Naive thymus-derived CD4-positive, alpha-beta T cell (primary cell): ENCODE measurements at regions of chr14 and their contacts with region 1.

Region 1: GRCh38 chr14:50792051-50792477 is 38.9 kb downstream of the NIN start:
- DNase-seq: peak in 7 of 9 donors; percentile 35 to 56 (median 41)
- ATAC-seq: peak; percentile 72
- H3K4me3 ChIP-seq: peak overlapping the region; percentile 56
- H3K4me3 Mint-ChIP-seq: peak overlapping the region; percentile 67 to 89 (median 82)
- H3K27ac ChIP-seq: peak overlapping the region; percentile 71
- H3K27ac Mint-ChIP-seq: peak overlapping the region; percentile 91 to 99 (median 96)
- H3K4me1 ChIP-seq: peaks cover 53 to 69% of the 10 kb centered on the region in 2 donors
- H3K4me1 Mint-ChIP-seq: peaks cover 42 to 100% (median 91%) of the 10 kb centered on the region in 7 donors
- H3K27me3 ChIP-seq: no peaks in the 10 kb centered on the region
- H3K27me3 Mint-ChIP-seq: no peaks in the 10 kb centered on the region

Region 2: DNA sequence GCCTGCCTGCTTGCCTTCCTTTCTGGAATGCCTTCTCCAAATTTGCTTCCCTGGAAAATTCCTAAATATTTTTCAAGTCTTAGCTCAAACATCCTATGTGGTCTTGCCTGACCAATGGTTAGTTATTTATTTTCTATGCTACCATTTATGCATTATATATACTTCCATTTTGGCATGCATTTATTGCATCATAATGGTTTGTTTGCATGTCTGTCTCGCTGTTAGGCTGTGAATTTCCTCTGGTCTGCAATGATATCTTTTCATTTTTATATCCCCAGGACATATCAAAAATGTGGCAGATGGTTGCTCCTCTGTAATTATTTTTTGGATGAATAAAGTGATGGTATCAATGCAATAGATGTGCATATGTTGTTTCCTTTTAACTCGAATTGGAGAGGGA is 201.6 kb before region 1 on chr14:
- CTCF ChIA-PET with region 1: no interaction called
- POLR2A ChIA-PET with region 1: no interaction called
- intact Hi-C with region 1: no loop called
- DNase-seq: no peak
- ATAC-seq: no peak
- H3K4me3 ChIP-seq: no peak overlapping the region
- H3K4me3 Mint-ChIP-seq: no peak overlapping the region
- H3K27ac ChIP-seq: no peak overlapping the region
- H3K27ac Mint-ChIP-seq: no peak overlapping the region
- H3K4me1 ChIP-seq: no peaks in the 10 kb centered on the region
- H3K4me1 Mint-ChIP-seq: peaks cover 0 to 2% (median 0%) of the 10 kb centered on the region in 7 donors
- H3K27me3 ChIP-seq: no peaks in the 10 kb centered on the region
- H3K27me3 Mint-ChIP-seq: peaks cover 0 to 16% (median 0%) of the 10 kb centered on the region in 5 donors

Region 3: DNA sequence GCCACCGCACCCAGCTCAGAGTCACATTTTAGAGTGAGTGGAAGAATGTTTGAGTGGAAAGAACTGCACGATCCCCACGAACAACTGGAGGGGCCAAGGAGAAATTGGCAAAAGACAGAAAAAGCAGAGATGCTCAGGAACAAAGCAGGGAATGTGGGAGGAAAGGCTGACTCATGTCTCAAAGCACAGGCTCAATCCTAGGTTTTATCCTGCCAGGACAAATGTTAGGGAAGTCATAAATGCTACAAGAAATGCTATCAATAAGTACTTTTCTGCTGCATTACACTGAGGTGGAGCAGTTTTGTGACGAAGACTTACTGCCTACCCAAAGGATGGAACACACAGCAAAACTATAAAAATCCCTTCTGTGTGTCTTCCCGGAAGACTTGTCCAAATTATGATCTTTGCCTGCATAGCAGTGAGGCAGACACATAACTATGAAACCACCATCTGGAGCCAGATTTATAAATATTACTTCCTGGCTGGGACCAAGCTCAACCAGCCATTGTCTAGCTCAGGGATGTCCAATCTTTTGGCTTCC is 12.2 kb after region 1 on chr14:
- CTCF ChIA-PET with region 1: no interaction called
- POLR2A ChIA-PET with region 1: interaction called, 12 read pairs
- intact Hi-C with region 1: loop called (anchors 2 kb)
- DNase-seq: no peak
- ATAC-seq: no peak
- H3K4me3 ChIP-seq: no peak overlapping the region
- H3K4me3 Mint-ChIP-seq: peak overlapping the region in 2 of 10 donors; percentile 25 to 27
- H3K27ac ChIP-seq: no peak overlapping the region
- H3K27ac Mint-ChIP-seq: peak overlapping the region in 7 of 9 donors; percentile 38 to 80 (median 65)
- H3K4me1 ChIP-seq: peaks cover 0 to 5% of the 10 kb centered on the region in 2 donors
- H3K4me1 Mint-ChIP-seq: peaks cover 6 to 77% (median 64%) of the 10 kb centered on the region in 7 donors
- H3K27me3 ChIP-seq: no peaks in the 10 kb centered on the region
- H3K27me3 Mint-ChIP-seq: no peaks in the 10 kb centered on the region

Region 4: DNA sequence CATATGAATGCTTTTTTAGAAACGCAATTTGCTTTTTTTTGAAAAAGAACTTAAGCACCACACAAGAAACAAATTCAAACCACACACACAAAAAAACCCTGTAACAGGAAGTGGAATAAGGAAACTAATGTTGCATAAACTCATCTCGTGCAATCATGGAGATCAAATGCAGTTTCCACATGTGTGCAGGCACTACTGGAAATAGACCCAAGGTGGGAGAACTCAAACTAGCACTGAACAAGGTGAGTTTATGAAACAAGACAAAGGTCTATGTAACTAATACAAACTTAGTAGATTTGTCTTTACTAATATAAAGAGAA is 21.4 kb after region 1 on chr14:
- CTCF ChIA-PET with region 1: interaction called, 4 read pairs
- POLR2A ChIA-PET with region 1: interaction called, 24 read pairs
- intact Hi-C with region 1: loop called in 1 of 2 experiments (anchors 1 kb)
- DNase-seq: peak in 7 of 9 donors; percentile 61 to 80 (median 75)
- ATAC-seq: peak; percentile 92
- H3K4me3 ChIP-seq: peak overlapping the region; percentile 38
- H3K4me3 Mint-ChIP-seq: peak overlapping the region; percentile 71 to 91 (median 86)
- H3K27ac ChIP-seq: peak overlapping the region; percentile 54
- H3K27ac Mint-ChIP-seq: peak overlapping the region; percentile 85 to 95 (median 93)
- H3K4me1 ChIP-seq: peaks cover 19 to 37% of the 10 kb centered on the region in 2 donors
- H3K4me1 Mint-ChIP-seq: peaks cover 42 to 81% (median 64%) of the 10 kb centered on the region in 7 donors
- H3K27me3 ChIP-seq: no peaks in the 10 kb centered on the region
- H3K27me3 Mint-ChIP-seq: no peaks in the 10 kb centered on the region

Region 5: DNA sequence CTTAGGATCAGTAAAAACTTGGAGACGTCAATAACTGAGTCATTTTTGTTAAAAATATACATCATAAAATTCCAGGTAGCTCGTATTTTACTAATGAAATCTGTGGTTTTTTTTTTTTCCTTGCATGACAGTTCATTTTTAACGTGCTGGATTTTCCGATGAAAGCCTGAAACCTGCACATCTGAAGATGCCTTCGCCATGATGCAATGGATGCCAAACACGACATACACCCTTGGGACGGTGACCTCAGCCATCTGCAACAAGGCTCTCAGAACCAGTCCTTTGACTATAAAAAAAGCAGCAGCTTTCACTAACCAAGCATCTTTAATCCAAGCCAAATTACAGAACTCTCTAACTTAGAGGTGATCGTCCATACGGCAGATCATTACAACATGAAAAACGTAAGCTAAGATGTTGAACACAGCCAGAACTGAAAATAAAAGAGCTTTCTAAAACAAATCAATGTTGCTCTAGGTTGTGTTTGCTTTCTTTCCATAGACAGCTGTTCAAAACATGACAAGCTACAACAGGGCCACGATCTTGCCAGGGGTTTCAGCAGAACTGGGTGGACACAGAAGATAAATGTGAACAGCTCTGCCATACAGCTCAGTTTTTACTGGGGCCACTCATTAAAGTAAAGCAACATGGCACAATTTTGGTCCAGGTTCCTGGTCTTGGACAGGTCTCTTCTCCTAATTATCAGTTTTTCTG is 31.1 kb after region 1 on chr14:
- CTCF ChIA-PET with region 1: interaction called, 7 read pairs
- POLR2A ChIA-PET with region 1: interaction called, 47 read pairs
- intact Hi-C with region 1: loop called in 1 of 2 experiments (anchors 5 kb)
- DNase-seq: peak in 4 of 9 donors; percentile 13 to 26 (median 20)
- ATAC-seq: peak; percentile 14
- H3K4me3 ChIP-seq: peak overlapping the region; percentile 48
- H3K4me3 Mint-ChIP-seq: peak overlapping the region; percentile 51 to 85 (median 80)
- H3K27ac ChIP-seq: peak overlapping the region; percentile 69
- H3K27ac Mint-ChIP-seq: peak overlapping the region; percentile 89 to 97 (median 92)
- H3K4me1 ChIP-seq: peaks cover 85 to 87% of the 10 kb centered on the region in 2 donors
- H3K4me1 Mint-ChIP-seq: peaks cover 74 to 97% (median 92%) of the 10 kb centered on the region in 7 donors
- H3K27me3 ChIP-seq: no peaks in the 10 kb centered on the region
- H3K27me3 Mint-ChIP-seq: no peaks in the 10 kb centered on the region